CD4-positive, alpha-beta memory T cell (primary cell): ENCODE measurements at regions of chr19 and their contacts with region 1.

Region 1: DNA sequence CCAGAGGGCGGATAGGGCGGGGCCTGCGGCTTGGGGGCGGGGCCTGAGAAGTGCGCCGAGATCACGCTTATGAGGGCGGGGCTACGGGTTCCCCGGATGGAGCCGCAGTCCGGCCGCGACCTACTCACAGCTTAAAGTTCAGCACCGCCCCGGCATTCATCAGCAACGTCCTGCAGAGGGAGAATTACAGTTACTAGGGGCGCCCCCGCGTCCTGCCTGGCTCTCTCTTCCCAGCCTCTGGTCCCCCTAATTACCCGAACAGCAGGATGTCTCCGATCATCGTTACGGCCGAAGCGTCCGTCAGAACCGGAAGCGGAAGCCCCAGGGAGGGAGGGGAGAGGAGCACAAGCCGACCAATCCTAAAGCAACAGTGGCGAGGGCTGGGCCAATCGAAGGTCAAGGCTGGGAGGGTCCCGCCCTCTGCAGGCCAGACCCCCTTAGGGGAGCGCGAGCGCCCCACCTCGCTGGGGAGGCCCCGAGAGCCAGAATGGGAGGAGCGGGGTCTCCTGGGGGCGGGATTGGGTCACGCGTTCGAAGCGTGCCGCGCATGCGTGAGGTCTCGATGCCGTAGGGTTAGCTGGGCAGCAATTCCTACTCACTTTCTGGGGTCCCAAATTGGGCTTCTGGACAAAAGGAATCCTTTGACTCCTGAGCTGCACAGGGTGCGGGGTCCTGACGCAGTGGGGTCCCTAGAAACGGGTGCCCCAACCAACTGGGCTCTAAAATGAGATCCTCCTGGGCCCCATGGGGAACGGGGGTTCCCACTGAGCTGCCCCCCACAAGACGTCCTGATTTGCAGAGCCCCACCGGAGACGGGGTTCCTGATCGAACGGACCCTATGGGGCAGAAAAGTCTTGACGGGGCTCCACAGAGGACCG is at the start of gene SMIM7:
- DNase-seq: peak; percentile 99
- H3K4me3 ChIP-seq: peak within 1 kb of the TSS; percentile 96
- H3K4me3 Mint-ChIP-seq: peak within 1 kb of the TSS; percentile 96 to 99 (median 98)
- H3K27ac ChIP-seq: peak within 1 kb of the TSS; percentile 82
- H3K27ac Mint-ChIP-seq: peak within 1 kb of the TSS; percentile 96 to 99 (median 99)
- H3K4me1 ChIP-seq: peaks cover 37% of the 10 kb centered on the region
- H3K4me1 Mint-ChIP-seq: peaks cover 21 to 58% (median 44%) of the 10 kb centered on the region in 4 donors
- H3K27me3 ChIP-seq: no peaks in the 10 kb centered on the region
- H3K27me3 Mint-ChIP-seq: no peaks in the 10 kb centered on the region
- total RNA-seq, gene SMIM7: 89.3 to 94.1 TPM

Region 2: GRCh38 chr19:16470911-16471811 is 188.9 kb before region 1 on chr19:
- CTCF ChIA-PET with region 1: no interaction called
- POLR2A ChIA-PET with region 1: interaction called, 4 read pairs
- intact Hi-C with region 1: loop called (anchors 1 kb)
- DNase-seq: peak in 3 of 5 donors; percentile 13 to 15 (median 13)
- H3K4me3 ChIP-seq: peak overlapping the region; percentile 42 to 61
- H3K4me3 Mint-ChIP-seq: peak overlapping the region; percentile 87 to 92 (median 90)
- H3K27ac ChIP-seq: peak overlapping the region; percentile 79
- H3K27ac Mint-ChIP-seq: peak overlapping the region; percentile 26 to 91 (median 84)
- H3K4me1 ChIP-seq: peaks cover 33% of the 10 kb centered on the region
- H3K4me1 Mint-ChIP-seq: peaks cover 28 to 49% (median 36%) of the 10 kb centered on the region in 4 donors
- H3K27me3 ChIP-seq: no peaks in the 10 kb centered on the region
- H3K27me3 Mint-ChIP-seq: peaks cover 0 to 2% of the 10 kb centered on the region in 2 donors

Region 3: DNA sequence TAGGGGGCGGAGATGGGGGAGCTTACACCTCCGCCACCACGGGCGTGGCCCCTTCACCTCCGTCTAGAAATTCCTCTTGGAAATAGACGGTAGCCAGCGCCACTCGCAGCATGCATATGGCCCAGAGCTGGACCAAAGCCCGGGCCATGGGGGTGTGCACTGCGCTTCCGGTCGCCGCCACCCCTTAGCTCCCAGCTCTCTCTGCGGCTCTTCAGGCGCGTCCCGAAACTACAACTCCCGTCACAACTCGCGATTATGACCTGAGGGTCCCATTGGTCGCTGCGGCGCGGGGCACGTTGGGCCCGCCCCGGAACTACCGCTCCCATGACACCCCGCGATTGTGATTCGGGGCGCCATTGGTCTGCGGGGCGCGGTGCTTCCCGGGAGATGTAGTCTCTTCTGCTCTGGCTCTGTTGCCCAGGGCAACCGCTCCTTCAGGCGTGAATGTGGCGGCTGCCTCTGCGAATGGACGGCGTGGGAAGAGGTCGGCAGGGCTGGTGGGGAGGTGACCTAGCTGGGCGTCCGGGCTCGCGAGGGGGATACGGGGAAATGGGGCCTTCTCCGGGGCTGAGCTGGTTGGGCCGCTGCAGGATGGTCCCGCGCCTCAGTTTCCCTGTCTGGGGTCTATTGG is 164.0 kb before region 1 on chr19 and contains the starts of genes C19orf44 and CALR3:
- CTCF ChIA-PET with region 1: interaction called, 3 read pairs
- POLR2A ChIA-PET with region 1: interaction called, 5 read pairs
- intact Hi-C with region 1: loop called (anchors 1 kb)
- DNase-seq: peak; percentile 96 to 97 (median 96)
- H3K4me3 ChIP-seq: peak within 1 kb of the TSS; percentile 65 to 75
- H3K4me3 Mint-ChIP-seq: peak within 1 kb of the TSS; percentile 89 to 95 (median 92)
- H3K27ac ChIP-seq: peak within 1 kb of the TSS; percentile 50
- H3K27ac Mint-ChIP-seq: peak within 1 kb of the TSS; percentile 79 to 97 (median 93)
- H3K4me1 ChIP-seq: peaks cover 10% of the 10 kb centered on the region
- H3K4me1 Mint-ChIP-seq: peaks cover 5 to 14% (median 9%) of the 10 kb centered on the region in 4 donors
- H3K27me3 ChIP-seq: no peaks in the 10 kb centered on the region
- H3K27me3 Mint-ChIP-seq: no peaks in the 10 kb centered on the region
- total RNA-seq, gene C19orf44: 4.6 to 6.7 TPM
- total RNA-seq, gene CALR3: not detected

Region 4: DNA sequence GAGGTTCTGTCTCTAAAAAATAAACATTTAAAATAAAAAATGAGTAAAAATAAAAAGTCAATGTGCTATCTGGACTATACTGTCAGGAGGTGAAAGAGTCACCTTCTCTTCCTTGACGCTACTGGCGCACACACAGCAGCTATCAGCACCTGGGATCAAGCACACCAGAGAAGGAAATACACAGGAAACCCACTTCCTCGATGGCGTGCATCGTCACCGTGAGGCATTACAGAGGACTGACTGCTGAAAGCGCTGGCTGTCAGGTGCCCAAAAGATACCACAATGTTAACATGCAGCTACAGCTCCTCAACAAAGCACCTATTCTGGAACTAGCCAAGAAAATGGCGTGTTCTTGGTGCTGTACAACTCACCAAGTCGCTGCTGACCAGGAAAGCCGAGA is 93.9 kb before region 1 on chr19:
- CTCF ChIA-PET with region 1: interaction called, 5 read pairs
- POLR2A ChIA-PET with region 1: interaction called, 17 read pairs
- intact Hi-C with region 1: loop called (anchors 1 kb)
- DNase-seq: peak; percentile 89 to 96 (median 93)
- H3K4me3 ChIP-seq: peak overlapping the region; percentile 22 to 31
- H3K4me3 Mint-ChIP-seq: peak overlapping the region; percentile 83 to 98 (median 86)
- H3K27ac ChIP-seq: peak overlapping the region; percentile 71
- H3K27ac Mint-ChIP-seq: peak overlapping the region; percentile 87 to 100 (median 100)
- H3K4me1 ChIP-seq: peaks cover 47% of the 10 kb centered on the region
- H3K4me1 Mint-ChIP-seq: peaks cover 23 to 61% (median 44%) of the 10 kb centered on the region in 4 donors
- H3K27me3 ChIP-seq: no peaks in the 10 kb centered on the region
- H3K27me3 Mint-ChIP-seq: no peaks in the 10 kb centered on the region

Region 5: DNA sequence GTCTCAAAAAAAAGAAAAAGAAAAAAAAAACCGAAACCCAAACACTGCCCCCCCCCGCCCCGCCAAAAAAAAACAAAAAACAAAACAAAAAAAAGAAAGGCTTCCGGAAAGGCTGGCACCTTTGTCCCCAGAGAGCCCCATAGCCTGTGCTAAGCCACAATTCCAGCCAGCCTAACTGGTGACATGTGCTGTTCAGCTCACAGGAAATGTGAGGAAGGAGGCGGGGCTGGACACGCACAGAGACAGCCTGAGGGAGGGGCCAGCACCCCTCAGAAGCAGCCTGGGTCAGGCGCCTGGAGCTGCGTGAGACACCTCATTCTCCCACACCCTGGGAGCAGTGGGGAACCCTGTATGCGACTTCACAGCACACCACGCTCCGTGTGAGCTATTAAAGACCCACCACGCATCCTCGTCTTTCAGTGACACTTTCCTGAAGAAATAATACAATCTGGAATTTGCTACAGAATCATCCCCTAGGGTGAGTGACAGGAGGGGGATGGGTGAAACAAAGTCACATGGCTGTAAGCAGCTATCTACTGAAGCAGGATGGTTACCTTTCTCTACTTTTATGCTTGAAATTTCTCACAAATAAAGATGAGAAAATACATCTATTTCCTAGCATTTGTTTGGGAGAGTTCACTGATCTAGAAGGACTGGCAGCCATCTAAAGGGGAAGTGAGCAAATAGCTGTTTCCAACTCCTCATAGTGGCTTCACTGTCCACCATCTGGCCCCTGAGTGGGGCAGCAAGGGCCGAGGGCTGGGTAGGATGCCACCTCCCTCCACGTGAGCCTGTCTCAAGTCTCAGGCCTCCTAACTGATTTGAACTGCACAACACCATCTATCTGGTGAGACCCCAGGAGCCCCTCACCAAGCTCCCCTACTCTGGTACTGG is 75.6 kb before region 1 on chr19:
- CTCF ChIA-PET with region 1: interaction called, 3 read pairs
- POLR2A ChIA-PET with region 1: interaction called, 19 read pairs
- intact Hi-C with region 1: no loop called
- DNase-seq: peak; percentile 89 to 99 (median 91)
- H3K4me3 ChIP-seq: peak overlapping the region; percentile 45 to 52
- H3K4me3 Mint-ChIP-seq: peak overlapping the region; percentile 70 to 90 (median 80)
- H3K27ac ChIP-seq: peak overlapping the region; percentile 58
- H3K27ac Mint-ChIP-seq: peak overlapping the region; percentile 96 to 99 (median 97)
- H3K4me1 ChIP-seq: peaks cover 86% of the 10 kb centered on the region
- H3K4me1 Mint-ChIP-seq: peaks cover 53 to 93% (median 74%) of the 10 kb centered on the region in 4 donors
- H3K27me3 ChIP-seq: no peaks in the 10 kb centered on the region
- H3K27me3 Mint-ChIP-seq: no peaks in the 10 kb centered on the region

Region 6: DNA sequence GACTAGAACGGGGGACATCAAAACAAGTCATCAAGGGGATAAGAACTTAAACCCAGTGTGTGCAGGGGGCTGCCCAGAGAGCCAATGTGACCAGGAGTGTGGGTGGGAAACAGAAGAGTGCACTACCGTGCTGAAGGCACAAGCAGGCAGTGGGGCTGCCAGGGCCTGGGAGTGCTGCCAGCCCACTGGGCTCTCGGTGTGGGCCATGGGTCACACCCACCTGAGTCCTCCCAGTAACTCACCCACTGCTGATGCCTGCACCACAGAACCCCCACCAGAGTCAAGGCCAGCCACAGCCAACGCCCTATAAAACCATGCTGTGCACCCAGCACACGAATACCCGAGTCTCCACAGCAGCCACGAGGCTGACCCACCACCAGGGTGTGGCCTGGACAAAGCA is 40.6 kb before region 1 on chr19:
- CTCF ChIA-PET with region 1: no interaction called
- POLR2A ChIA-PET with region 1: no interaction called
- intact Hi-C with region 1: no loop called
- DNase-seq: no peak
- H3K4me3 ChIP-seq: no peak overlapping the region
- H3K4me3 Mint-ChIP-seq: no peak overlapping the region
- H3K27ac ChIP-seq: no peak overlapping the region
- H3K27ac Mint-ChIP-seq: peak overlapping the region in 3 of 7 donors; percentile 22 to 75 (median 55)
- H3K4me1 ChIP-seq: peaks cover 87% of the 10 kb centered on the region
- H3K4me1 Mint-ChIP-seq: peaks cover 44 to 94% (median 71%) of the 10 kb centered on the region in 4 donors
- H3K27me3 ChIP-seq: no peaks in the 10 kb centered on the region
- H3K27me3 Mint-ChIP-seq: no peaks in the 10 kb centered on the region

Region 7: GRCh38 chr19:16703677-16704076 is 43.6 kb after region 1 on chr19:
- CTCF ChIA-PET with region 1: no interaction called
- POLR2A ChIA-PET with region 1: no interaction called
- intact Hi-C with region 1: no loop called
- DNase-seq: no peak
- H3K4me3 ChIP-seq: no peak overlapping the region
- H3K4me3 Mint-ChIP-seq: no peak overlapping the region
- H3K27ac ChIP-seq: no peak overlapping the region
- H3K27ac Mint-ChIP-seq: no peak overlapping the region
- H3K4me1 ChIP-seq: no peaks in the 10 kb centered on the region
- H3K4me1 Mint-ChIP-seq: no peaks in the 10 kb centered on the region
- H3K27me3 ChIP-seq: no peaks in the 10 kb centered on the region
- H3K27me3 Mint-ChIP-seq: peaks cover 0 to 2% of the 10 kb centered on the region in 2 donors